Endothelial cell of umbilical vein (primary cell): ENCODE measurements at regions of chr14 and their contacts with region 1.

Region 1: GRCh38 chr14:60724137-60724619 is at the start of gene SIX4:
- DNase-seq: peak; percentile 85
- H3K4me3 ChIP-seq: peak within 1 kb of the TSS; percentile 81 to 94 (median 86)
- H3K27ac ChIP-seq: peak within 1 kb of the TSS; percentile 57
- H3K4me1 ChIP-seq: peaks cover 8% of the 10 kb centered on the region
- H3K27me3 ChIP-seq: peaks cover 9 to 16% of the 10 kb centered on the region in 2 experiments
- CTCF ChIP-seq: no peak
- POLR2A ChIP-seq: peak; percentile 75
- total RNA-seq, gene SIX4: 4.7 and 7.5 TPM in 2 replicates

Region 2: DNA sequence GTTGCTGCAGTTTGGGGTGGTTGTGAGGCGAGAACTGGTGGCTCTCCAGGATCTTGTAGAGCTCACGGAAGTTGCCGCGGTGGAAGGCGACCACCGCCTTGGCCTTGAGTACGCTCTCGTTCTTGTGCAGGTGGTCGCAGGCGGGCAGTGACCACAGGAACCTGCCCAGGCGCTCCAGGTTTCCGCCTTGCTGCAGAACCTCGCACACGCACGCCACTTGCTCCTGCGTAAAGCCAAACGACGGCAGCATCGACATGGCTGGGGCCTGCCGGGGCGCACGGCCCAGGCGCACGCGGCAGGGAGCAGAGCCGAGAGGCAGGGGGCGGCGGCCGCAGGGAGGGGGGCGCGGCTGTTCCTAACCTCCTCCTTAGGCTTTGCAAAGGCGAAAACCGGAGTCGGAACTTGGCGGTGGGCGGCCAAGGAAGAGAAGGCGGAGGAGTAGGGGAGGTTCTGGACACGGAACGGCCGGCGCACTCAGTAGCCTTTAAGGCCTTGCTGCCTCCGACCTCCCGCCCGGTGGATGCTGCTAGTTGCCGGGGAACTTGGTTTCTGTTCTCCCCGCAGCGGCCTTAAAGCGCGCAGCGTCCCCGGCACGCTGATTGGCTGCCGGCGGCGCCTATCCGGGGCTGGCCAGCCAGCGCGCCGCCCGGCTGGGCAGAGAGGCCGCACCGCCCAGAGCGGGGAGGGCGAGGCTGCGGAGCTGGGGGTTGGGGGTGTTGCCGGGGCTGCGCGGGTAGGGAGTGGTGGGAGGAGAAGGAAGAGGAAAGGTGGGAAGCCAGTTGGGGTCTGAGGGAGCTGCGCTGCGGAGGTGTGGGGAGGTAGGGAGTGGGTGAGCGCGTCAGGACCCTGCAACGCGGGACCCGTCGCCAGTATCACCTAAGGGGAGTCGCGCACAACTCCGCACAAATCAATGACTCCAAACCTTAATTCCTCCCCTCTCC is 75.0 kb before region 1 on chr14 and contains the start of gene SIX1:
- CTCF ChIA-PET with region 1: no interaction called
- POLR2A ChIA-PET with region 1: no interaction called
- dilution Hi-C with region 1: no loop called
- intact Hi-C with region 1: loop called (anchors 1 kb)
- DNase-seq: peak; percentile 83
- H3K4me3 ChIP-seq: peak within 1 kb of the TSS; percentile 12 to 47 (median 15)
- H3K27ac ChIP-seq: no peak within 1 kb of the TSS
- H3K4me1 ChIP-seq: peaks cover 25% of the 10 kb centered on the region
- H3K27me3 ChIP-seq: peaks cover 80 to 98% of the 10 kb centered on the region in 2 experiments
- CTCF ChIP-seq: no peak
- POLR2A ChIP-seq: peak; percentile 57
- total RNA-seq, gene SIX1: 0.40 and 0.55 TPM in 2 replicates

Region 3: DNA sequence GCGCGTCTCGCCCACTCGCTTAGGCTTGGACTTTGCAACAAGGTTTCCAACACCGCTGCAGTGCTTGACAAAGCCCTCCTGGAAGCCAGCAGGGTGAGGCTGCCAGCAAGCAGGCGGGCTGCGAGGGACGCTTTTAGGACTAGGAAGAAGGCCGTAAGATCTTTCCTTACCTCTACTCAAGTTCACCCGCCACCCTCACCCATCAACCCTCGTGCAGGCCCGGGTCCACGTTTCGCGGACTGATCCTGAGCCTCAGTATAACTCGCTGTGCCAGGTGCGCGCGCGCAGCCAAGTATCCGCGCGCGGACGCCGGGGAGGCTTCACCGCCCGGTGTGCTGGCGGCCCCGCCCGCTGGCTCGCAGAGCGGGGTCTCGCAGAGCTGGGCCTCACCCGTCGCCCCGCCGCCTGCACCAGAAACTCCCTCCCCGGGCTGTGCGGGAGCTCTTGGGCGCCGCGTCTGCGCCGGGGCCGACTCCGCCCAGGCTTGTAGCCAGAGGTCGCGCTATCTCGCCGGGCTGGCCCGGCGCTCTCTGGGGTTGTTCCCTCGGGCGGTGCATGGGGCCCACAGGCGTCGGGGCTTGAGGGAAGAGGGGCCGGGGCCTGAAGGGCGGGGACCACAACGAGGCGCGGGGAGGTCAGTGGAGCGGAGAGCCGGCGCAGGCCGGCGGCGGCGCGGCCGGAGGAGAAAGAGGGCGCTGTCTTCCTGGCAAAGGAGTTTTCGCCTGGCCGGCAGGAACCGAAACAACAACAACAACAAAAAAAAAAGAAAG is 67.3 kb before region 1 on chr14:
- CTCF ChIA-PET with region 1: interaction called, 15 read pairs
- POLR2A ChIA-PET with region 1: no interaction called
- dilution Hi-C with region 1: no loop called
- intact Hi-C with region 1: loop called (anchors 1 kb)
- DNase-seq: peak; percentile 65
- H3K4me3 ChIP-seq: peak overlapping the region; percentile 22 to 64 (median 59)
- H3K27ac ChIP-seq: peak overlapping the region; percentile 3
- H3K4me1 ChIP-seq: peaks cover 10% of the 10 kb centered on the region
- H3K27me3 ChIP-seq: peaks cover 35 to 44% of the 10 kb centered on the region in 2 experiments
- CTCF ChIP-seq: peak; percentile 39 to 59
- POLR2A ChIP-seq: no peak

Region 4: DNA sequence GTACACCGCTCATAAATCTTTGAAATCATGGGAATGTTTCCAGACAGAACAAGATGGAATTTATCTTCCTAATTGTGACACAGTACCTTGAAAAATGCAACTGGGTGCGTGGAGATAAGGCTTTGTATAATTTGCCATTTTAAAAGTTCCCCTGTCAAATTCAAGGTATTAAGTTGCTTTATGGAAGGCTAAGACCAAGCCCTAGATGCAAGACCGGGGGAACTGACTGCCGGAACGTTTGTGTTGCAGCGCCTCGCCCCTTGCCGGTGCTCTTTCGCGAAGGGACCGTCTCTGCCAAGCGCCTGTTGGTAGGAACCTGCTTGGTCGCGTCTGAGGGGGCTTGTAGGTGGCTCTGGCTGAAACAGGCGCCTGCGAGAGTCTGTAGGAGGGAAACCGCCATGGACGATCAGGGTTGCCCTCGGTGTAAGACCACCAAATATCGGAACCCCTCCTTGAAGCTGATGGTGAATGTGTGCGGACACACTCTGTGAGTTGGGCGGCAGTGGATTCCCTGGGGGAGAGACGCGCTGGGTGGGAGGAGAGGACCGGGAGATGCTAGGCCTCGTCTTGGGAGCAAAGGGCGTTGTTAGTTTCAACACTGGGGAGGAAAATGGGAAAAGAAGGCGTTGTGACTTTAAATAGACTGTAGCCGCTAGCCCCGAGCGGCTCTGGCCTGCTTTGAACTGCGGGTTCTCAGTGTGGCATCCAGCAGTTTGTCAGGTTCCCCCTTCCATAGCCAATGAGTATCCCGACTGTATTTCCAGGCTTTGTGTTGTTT is 10.5 kb after region 1 on chr14 and contains the start of gene MNAT1:
- CTCF ChIA-PET with region 1: interaction called, 14 read pairs
- POLR2A ChIA-PET with region 1: interaction called, 4 read pairs
- dilution Hi-C with region 1: no loop called
- intact Hi-C with region 1: loop called (anchors 1 kb)
- DNase-seq: peak; percentile 90
- H3K4me3 ChIP-seq: peak within 1 kb of the TSS; percentile 38 to 75 (median 59)
- H3K27ac ChIP-seq: peak within 1 kb of the TSS; percentile 32
- H3K4me1 ChIP-seq: peaks cover 16% of the 10 kb centered on the region
- H3K27me3 ChIP-seq: peaks cover 9 to 25% of the 10 kb centered on the region in 2 experiments
- CTCF ChIP-seq: no peak
- POLR2A ChIP-seq: peak; percentile 77
- total RNA-seq, gene MNAT1: 55.7 and 58.0 TPM in 2 replicates

Region 5: DNA sequence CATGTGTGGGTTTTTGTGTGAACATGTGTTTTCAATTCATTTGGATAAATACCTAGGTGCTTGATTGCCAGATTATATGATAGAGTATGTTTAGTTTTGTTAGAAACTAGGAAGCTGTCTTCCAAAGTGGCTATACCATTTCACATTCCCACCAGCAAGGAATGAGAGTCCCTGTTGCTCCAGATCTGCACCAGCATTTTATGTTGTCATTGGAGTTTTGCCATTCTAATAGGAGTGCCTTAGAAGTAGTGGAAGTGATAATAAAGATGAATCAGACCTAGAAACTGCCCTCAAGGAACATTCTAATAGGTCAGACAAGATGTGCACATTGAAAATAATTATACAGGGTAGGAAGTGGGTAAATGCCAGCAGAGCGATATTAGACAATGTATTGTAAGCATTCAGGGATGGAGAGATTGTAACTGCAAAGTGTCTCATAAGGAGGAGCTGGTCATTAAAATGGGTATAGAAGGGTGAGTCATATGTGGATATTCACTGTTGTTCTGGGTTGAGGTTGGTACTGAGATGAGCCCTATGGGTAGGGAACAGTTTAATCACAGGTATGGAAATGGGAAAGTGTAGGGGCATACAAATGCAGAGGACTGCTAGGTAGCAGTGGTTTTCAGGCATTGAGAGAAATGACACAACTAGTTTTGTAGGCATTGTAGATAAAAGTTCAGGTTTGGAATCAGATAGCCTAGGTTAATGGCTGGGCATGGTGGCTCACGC is 81.8 kb after region 1 on chr14:
- CTCF ChIA-PET with region 1: no interaction called
- POLR2A ChIA-PET with region 1: no interaction called
- dilution Hi-C with region 1: no loop called
- intact Hi-C with region 1: no loop called
- DNase-seq: peak; percentile 9
- H3K4me3 ChIP-seq: no peak overlapping the region
- H3K27ac ChIP-seq: no peak overlapping the region
- H3K4me1 ChIP-seq: peaks cover 8% of the 10 kb centered on the region
- H3K27me3 ChIP-seq: no peaks in the 10 kb centered on the region
- CTCF ChIP-seq: no peak
- POLR2A ChIP-seq: no peak